Naive thymus-derived CD4-positive, alpha-beta T cell (primary cell): ENCODE measurements at regions of chr7 and their contacts with region 1.

Region 1: DNA sequence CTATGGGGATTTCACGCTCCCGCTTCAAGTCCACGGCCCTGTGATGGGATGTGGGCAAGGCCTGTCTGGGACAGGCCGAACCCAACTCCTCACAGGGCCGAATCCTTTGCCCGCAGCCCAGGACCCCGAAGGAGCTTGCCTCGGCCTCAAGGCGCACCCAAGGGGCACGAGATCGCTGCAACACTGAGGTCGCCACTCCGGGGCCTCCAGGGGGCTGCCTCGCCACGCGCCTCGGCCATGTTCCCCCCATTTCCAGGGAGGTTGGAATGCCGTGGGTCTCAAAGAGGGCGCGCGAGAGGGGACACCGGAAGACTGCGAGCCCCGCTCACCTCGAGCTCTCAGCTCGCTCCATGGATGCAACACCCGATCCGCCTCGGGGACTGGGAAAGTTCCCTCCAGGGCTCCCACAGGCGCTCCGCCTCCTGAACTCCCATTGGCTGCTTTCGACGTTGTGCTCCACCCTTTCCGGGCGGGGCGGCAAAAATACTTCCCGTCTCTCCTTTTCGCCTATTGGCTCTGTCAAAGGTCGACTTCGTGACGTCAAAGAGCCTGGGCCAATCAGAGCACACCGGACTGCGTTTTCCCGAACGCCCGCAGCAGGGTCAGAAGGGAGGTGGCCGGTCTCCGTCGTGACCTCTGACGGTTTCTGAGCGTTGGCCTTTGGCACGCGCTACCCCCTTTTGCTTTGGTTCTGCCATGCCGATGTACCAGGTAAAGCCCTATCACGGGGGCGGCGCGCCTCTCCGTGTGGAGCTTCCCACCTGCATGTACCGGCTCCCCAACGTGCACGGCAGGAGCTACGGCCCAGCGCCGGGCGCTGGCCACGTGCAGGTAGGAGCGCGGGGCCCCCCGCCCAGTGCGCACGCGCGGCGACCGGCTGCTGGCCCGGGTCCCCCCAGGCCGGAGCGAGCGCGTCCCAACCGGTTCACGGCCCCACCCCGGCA is at the starts of genes AIMP2 and PMS2:
- DNase-seq: peak; percentile 82 to 96 (median 93)
- ATAC-seq: peak; percentile 95
- H3K4me3 ChIP-seq: peak within 1 kb of the TSS; percentile 99
- H3K4me3 Mint-ChIP-seq: peak within 1 kb of the TSS; percentile 93 to 99 (median 95)
- H3K27ac ChIP-seq: peak within 1 kb of the TSS; percentile 82
- H3K27ac Mint-ChIP-seq: peak within 1 kb of the TSS; percentile 88 to 98 (median 96)
- H3K4me1 ChIP-seq: peaks cover 0 to 5% of the 10 kb centered on the region in 2 donors
- H3K4me1 Mint-ChIP-seq: peaks cover 7 to 52% (median 33%) of the 10 kb centered on the region in 7 donors
- H3K27me3 ChIP-seq: no peaks in the 10 kb centered on the region
- H3K27me3 Mint-ChIP-seq: no peaks in the 10 kb centered on the region
- total RNA-seq, gene AIMP2: 5.0 to 37.9 (median 11.8) TPM
- total RNA-seq, gene PMS2: 12.5 to 26.3 (median 23.5) TPM

Region 2: DNA sequence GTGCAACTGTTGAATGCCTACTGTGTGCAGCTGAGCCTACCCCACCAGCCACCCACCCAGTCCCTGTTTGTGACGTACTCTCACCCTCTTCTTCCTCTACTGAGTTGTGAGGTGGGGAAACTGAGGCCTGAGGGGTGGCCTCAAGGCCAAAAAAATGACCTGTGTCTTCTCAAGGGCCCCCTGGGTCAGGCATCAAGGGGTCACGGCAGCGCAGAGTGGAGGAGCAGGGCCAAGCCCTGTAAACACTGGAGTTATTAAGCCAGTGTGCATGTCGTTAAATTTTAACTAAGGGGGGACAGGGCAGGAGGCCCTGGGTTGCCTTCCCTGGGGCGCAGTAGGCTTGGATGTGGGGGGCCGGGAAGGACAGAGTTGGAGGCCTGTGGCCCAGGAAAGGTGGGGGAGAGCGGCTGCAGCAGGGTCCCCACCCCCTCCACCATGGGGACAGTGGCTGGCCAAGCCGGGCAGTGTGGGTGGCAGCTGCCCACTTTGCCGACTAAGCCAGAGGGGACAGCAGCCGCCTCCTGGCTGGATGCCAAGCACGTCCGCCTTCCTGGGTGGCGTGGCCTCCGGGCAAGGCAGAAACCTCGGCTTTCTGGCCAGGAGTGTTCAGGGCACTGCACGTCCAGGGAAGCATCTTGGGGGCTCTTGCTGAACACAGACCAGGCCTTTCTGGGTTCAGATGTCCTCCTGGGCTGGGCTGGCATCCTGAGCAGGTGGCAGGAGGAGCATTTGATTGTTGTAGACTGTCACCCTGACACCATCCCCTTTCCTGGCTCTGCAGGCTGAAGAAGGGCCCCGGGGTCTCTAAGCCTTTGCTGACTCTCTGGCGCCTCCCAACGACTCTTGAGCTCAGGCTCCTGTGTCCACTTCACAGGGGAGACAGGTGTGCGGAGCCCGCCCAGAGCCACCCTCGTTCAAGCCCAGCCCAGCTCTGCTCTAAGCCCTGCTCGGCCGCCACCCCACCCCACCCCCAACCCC is 724.3 kb before region 1 on chr7:
- CTCF ChIA-PET with region 1: no interaction called
- POLR2A ChIA-PET with region 1: no interaction called
- intact Hi-C with region 1: no loop called
- DNase-seq: no peak
- ATAC-seq: no peak
- H3K4me3 ChIP-seq: no peak overlapping the region
- H3K4me3 Mint-ChIP-seq: peak overlapping the region in 9 of 10 donors; percentile 14 to 52 (median 40)
- H3K27ac ChIP-seq: no peak overlapping the region
- H3K27ac Mint-ChIP-seq: no peak overlapping the region
- H3K4me1 ChIP-seq: no peaks in the 10 kb centered on the region
- H3K4me1 Mint-ChIP-seq: peaks cover 0 to 2% (median 0%) of the 10 kb centered on the region in 7 donors
- H3K27me3 ChIP-seq: no peaks in the 10 kb centered on the region
- H3K27me3 Mint-ChIP-seq: peaks cover 5 to 28% (median 5%) of the 10 kb centered on the region in 5 donors

Region 3: GRCh38 chr7:5822742-5823503 is 186.0 kb before region 1 on chr7:
- CTCF ChIA-PET with region 1: no interaction called
- POLR2A ChIA-PET with region 1: no interaction called
- intact Hi-C with region 1: loop called in 1 of 2 experiments (anchors 2 kb)
- DNase-seq: peak; percentile 88 to 99 (median 99)
- ATAC-seq: peak; percentile 95
- H3K4me3 ChIP-seq: peak overlapping the region; percentile 95
- H3K4me3 Mint-ChIP-seq: peak overlapping the region; percentile 74 to 94 (median 88)
- H3K27ac ChIP-seq: peak overlapping the region; percentile 86
- H3K27ac Mint-ChIP-seq: peak overlapping the region; percentile 82 to 97 (median 93)
- H3K4me1 ChIP-seq: peaks cover 15% of the 10 kb centered on the region in 2 donors
- H3K4me1 Mint-ChIP-seq: peaks cover 15 to 43% (median 23%) of the 10 kb centered on the region in 7 donors
- H3K27me3 ChIP-seq: no peaks in the 10 kb centered on the region
- H3K27me3 Mint-ChIP-seq: no peaks in the 10 kb centered on the region

Region 4: DNA sequence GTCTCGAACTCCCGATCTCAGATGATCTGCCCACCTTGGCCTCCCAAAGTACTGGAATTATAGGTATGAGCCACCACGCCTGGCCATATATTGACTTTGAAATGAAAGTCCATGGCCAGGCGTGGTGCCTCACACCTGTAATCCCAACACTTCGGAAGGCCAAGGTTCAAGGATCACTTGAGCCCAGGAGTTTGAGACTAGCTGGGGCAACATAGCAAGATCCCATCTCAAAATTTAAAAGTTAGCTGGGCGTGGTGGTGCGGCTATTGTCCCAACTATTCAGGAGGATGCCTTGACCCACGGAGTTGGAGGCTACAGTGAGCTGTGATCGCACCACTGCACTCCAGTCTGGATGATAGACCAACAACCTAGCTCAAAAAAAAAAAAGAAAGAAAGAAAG is 116.4 kb before region 1 on chr7:
- CTCF ChIA-PET with region 1: no interaction called
- POLR2A ChIA-PET with region 1: no interaction called
- intact Hi-C with region 1: loop called in 1 of 2 experiments (anchors 10 kb)
- DNase-seq: no peak
- ATAC-seq: no peak
- H3K4me3 ChIP-seq: no peak overlapping the region
- H3K4me3 Mint-ChIP-seq: no peak overlapping the region
- H3K27ac ChIP-seq: no peak overlapping the region
- H3K27ac Mint-ChIP-seq: no peak overlapping the region
- H3K4me1 ChIP-seq: no peaks in the 10 kb centered on the region
- H3K4me1 Mint-ChIP-seq: peaks cover 0 to 3% (median 0%) of the 10 kb centered on the region in 7 donors
- H3K27me3 ChIP-seq: no peaks in the 10 kb centered on the region
- H3K27me3 Mint-ChIP-seq: no peaks in the 10 kb centered on the region

Region 5: DNA sequence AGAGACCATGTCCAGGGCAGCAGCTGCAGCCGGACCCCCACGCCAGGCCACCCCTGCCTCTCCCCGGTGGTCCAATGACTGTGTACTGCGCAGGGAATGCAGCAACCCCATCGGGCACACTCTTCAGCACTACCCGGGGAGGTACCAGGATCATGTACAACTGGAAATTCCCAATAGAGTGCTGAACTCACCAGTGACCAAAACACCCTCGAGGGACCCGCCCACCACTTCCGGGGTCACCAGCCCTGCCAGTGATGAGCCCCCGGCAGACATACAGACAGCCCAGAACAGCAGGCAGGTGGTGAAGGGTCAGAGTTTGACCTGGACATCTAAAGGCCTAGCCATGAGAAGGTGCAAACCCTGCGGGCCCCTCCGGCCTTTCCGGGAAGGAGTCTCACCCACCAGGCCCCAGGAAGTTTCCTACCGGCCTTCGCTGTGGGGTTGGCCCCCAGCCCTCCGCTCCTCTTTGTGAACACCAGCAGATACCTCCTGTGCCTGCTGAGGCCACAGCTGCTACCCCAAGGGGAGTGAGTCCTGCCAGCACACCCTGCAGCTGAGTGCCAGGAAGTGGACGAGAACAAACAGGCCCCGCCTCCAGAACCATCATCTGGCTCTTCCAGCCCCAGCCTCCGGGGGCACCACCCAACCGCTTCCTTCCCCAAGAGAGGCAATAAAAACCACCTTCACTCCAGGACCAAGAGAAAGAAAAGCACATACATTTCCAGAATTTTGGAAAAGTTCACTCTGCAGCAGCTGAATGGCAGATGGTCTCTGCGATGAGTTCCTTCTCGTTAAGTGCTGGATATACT is 17.3 kb after region 1 on chr7:
- CTCF ChIA-PET with region 1: interaction called, 4 read pairs
- POLR2A ChIA-PET with region 1: interaction called, 3 read pairs
- intact Hi-C with region 1: loop called in 1 of 2 experiments (anchors 1 kb)
- DNase-seq: peak; percentile 48 to 74 (median 69)
- ATAC-seq: peak; percentile 98
- H3K4me3 ChIP-seq: peak overlapping the region; percentile 14
- H3K4me3 Mint-ChIP-seq: peak overlapping the region; percentile 73 to 89 (median 83)
- H3K27ac ChIP-seq: peak overlapping the region; percentile 72
- H3K27ac Mint-ChIP-seq: peak overlapping the region; percentile 88 to 96 (median 93)
- H3K4me1 ChIP-seq: peaks cover 10 to 15% of the 10 kb centered on the region in 2 donors
- H3K4me1 Mint-ChIP-seq: peaks cover 14 to 32% (median 26%) of the 10 kb centered on the region in 7 donors
- H3K27me3 ChIP-seq: no peaks in the 10 kb centered on the region
- H3K27me3 Mint-ChIP-seq: no peaks in the 10 kb centered on the region

Region 6: DNA sequence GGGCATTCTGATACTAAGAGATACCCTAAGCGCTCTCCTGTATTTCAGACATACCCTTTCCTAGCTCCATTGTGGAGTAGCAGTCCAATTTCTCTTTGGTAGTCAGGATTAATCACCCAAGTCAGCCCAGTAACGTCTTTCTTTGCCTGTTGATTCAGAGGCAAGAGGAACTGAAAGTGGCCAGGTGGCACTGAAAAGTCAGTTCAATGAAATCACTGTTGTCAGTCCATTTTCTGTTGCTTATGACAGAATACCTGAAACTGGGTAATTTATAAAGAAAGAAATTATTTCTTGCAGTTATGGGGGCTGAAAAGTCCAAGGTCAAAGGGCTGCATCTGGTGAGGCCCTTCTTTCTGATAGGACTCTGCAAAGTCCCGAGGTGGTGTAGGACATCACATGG is 62.5 kb after region 1 on chr7:
- CTCF ChIA-PET with region 1: no interaction called
- POLR2A ChIA-PET with region 1: no interaction called
- intact Hi-C with region 1: no loop called
- DNase-seq: no peak
- ATAC-seq: no peak
- H3K4me3 ChIP-seq: no peak overlapping the region
- H3K4me3 Mint-ChIP-seq: no peak overlapping the region
- H3K27ac ChIP-seq: no peak overlapping the region
- H3K27ac Mint-ChIP-seq: no peak overlapping the region
- H3K4me1 ChIP-seq: no peaks in the 10 kb centered on the region
- H3K4me1 Mint-ChIP-seq: no peaks in the 10 kb centered on the region
- H3K27me3 ChIP-seq: no peaks in the 10 kb centered on the region
- H3K27me3 Mint-ChIP-seq: peaks cover 0 to 2% (median 0%) of the 10 kb centered on the region in 5 donors

Region 7: DNA sequence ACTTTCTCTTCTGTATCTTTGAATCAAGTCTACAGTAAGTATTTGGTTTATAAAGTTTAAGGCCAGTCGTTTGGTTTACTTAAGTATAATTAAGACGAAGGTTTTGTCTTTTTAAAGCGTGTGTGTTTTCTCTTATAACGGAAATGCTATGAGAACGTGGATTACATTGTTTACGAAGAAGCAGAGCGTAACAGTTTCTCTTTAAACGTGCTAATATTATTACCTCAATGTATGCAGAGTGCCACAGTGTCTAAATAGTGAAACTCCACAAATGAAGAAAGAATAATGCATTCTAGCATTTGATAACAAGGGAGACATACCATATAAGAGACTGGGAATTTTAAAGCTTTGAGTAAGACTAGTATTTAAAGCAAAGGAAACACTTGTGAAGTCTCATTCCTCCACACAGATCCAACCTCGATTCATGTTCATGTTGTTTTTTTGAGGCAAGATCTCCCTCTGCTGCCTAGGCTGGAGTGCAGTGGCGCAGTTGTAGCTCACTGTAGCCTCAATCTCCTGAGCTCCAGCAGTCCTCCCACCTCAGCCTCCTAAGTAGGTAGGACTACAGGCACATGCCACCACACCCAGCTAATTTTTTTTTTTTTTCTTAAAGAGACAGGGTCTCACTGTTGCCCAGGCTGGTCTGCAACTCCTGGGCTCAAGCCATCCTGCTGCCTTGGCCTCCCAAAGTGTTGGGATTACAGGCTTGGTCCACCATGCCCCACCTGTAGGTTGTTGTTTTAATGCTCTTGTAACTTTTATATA is 97.4 kb after region 1 on chr7:
- CTCF ChIA-PET with region 1: no interaction called
- POLR2A ChIA-PET with region 1: interaction called, 15 read pairs
- intact Hi-C with region 1: no loop called
- DNase-seq: peak in 7 of 9 donors; percentile 27 to 57 (median 51)
- ATAC-seq: no peak
- H3K4me3 ChIP-seq: peak overlapping the region; percentile 76
- H3K4me3 Mint-ChIP-seq: peak overlapping the region; percentile 84 to 96 (median 92)
- H3K27ac ChIP-seq: peak overlapping the region; percentile 90
- H3K27ac Mint-ChIP-seq: peak overlapping the region; percentile 87 to 97 (median 93)
- H3K4me1 ChIP-seq: peaks cover 7 to 9% of the 10 kb centered on the region in 2 donors
- H3K4me1 Mint-ChIP-seq: peaks cover 23 to 49% (median 41%) of the 10 kb centered on the region in 7 donors
- H3K27me3 ChIP-seq: no peaks in the 10 kb centered on the region
- H3K27me3 Mint-ChIP-seq: no peaks in the 10 kb centered on the region